Heart left ventricle (tissue), 16 donors: ENCODE measurements at regions of chr9 and their contacts with region 1.

Region 1: GRCh38 chr9:136400038-136400834 is at the start of gene SNAPC4:
- DNase-seq: peak; percentile 87 to 95 (median 88)
- ATAC-seq: peak; percentile 75 to 94 (median 92)
- H3K4me3 ChIP-seq: peak within 1 kb of the TSS; percentile 80 to 100 (median 94)
- H3K27ac ChIP-seq: peak within 1 kb of the TSS in 9 of 12 donors; percentile 2 to 75 (median 63)
- H3K4me1 ChIP-seq: peaks cover 0 to 37% (median 17%) of the 10 kb centered on the region in 12 donors
- H3K27me3 ChIP-seq: no peaks in the 10 kb centered on the region
- CTCF ChIP-seq: peak; percentile 78 to 99 (median 98)
- POLR2A ChIP-seq: peak in 1 of 2 donors; percentile 70
- total RNA-seq, gene SNAPC4: 3.1 to 7.8 (median 4.5) TPM

Region 2: DNA sequence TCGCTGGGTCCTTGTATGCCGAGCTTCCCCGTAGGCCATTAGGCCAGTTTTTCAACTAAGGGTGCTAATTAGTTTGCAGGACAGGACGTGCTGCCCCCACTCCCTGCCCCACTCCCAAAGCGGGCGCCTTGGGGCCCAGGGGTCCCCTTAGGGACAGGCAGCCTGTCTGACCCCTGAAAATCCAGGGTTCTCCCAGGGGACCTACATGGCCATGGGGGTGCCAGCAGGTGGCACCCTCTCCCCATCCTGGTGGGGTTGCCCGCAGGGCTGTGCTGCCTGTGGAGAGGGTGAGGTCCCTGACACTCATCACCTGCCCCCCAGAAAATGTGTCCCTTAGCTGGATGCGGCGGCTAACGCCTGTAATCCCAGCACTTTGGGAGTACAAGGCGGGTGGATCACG is 87.8 kb before region 1 on chr9:
- intact Hi-C with region 1: loop called in 3 of 10 experiments (anchors 1 to 5 kb)
- DNase-seq: peak in 1 of 5 donors; percentile 62
- ATAC-seq: peak in 3 of 4 donors; percentile 71 to 80 (median 80)
- H3K4me3 ChIP-seq: no peak overlapping the region
- H3K27ac ChIP-seq: no peak overlapping the region
- H3K4me1 ChIP-seq: no peaks in the 10 kb centered on the region
- H3K27me3 ChIP-seq: peaks cover 0 to 18% (median 4%) of the 10 kb centered on the region in 9 donors
- CTCF ChIP-seq: peak; percentile 45 to 68 (median 60)
- POLR2A ChIP-seq: no peak

Region 3: DNA sequence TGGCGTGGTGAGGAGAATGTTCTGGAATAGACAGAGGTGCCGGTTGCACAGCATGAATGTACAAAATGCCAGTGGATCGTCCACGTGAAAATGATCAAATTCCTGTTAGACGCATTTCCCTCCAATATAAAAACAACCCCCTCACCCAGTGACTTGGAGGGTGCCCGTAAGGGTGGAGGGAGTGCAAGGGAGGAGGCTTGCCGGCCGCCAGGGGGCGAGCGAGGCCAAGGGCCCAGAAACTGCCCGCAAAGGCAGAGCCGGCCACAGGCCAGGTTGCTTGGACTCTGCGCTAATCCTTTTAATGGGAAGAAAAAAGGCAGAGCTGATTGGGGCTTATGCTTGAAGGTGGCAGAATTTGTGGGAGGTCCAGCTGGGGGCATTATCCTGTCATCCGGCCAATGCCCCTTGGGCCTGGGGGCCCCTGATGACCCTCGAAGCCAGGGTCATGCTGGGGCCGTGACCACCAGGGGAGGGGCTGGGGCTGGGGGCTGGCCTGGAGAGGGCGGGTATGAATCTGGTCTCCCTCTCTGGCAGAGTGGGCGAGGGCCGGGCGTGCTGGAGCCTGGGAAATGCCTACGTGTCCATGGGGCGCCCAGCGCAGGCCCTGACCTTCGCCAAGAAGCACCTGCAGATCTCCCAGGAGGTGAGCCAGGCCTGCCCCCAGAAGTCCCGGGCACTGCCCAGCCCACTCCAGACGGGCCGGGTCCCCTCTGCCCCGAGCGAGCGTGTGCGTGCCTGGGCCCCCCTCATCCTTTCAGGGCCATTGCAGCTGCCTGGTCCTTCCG is 60.9 kb before region 1 on chr9:
- intact Hi-C with region 1: loop called in 8 of 10 experiments (anchors 1 to 10 kb)
- DNase-seq: peak in 4 of 5 donors; percentile 65 to 85 (median 72)
- ATAC-seq: peak in 1 of 4 donors; percentile 34
- H3K4me3 ChIP-seq: no peak overlapping the region
- H3K27ac ChIP-seq: peak overlapping the region in 3 of 12 donors; percentile 2 to 94 (median 30)
- H3K4me1 ChIP-seq: peaks cover 0 to 46% (median 26%) of the 10 kb centered on the region in 12 donors
- H3K27me3 ChIP-seq: no peaks in the 10 kb centered on the region
- CTCF ChIP-seq: peak; percentile 80 to 92 (median 84)
- POLR2A ChIP-seq: no peak

Region 4: DNA sequence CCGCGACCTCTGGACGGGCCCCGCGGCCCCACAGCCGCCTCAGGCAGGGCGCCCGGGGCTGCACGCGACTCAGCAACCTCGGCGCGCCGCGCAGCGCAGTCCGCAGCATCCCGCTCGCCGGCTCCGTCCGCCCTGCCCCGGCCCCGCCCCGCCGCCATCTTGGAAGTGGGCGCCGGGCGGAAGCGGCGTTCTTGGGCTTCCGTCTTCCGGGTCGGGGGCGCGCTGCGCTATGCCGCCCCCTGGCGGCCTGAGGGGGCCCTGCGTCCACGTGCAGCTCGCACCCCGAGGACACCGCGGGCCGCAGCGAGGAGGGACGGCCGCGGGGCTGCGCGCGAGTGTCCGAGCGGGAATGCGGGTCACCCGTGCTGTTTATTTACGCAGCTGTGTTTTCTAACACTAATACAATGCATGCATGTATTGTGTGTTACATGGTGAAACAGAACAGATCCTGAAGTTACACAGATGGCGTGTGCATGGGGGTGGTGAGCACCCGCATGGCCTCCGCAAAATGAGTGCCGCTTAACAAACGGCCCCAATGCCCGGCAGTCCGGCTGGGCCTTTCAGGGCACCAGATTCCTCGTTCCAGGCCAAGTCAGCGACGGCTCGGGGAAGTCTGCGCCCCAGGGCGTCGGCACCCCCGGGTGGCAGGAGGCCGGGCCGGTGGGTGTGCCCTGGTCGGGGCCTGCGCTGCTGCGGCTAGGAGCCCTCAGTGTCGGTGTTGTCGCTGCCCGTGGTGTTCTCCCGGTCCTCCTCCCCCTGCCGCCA is 36.4 kb before region 1 on chr9 and contains the start of gene DNLZ:
- intact Hi-C with region 1: loop called in 1 of 10 experiments (anchors 2 kb)
- DNase-seq: peak; percentile 84 to 95 (median 88)
- ATAC-seq: peak; percentile 11 to 61 (median 49)
- H3K4me3 ChIP-seq: peak within 1 kb of the TSS; percentile 60 to 98 (median 84)
- H3K27ac ChIP-seq: peak within 1 kb of the TSS; percentile 88 to 98 (median 96)
- H3K4me1 ChIP-seq: peaks cover 3 to 35% (median 22%) of the 10 kb centered on the region in 12 donors
- H3K27me3 ChIP-seq: no peaks in the 10 kb centered on the region
- CTCF ChIP-seq: peak; percentile 91 to 100 (median 98)
- POLR2A ChIP-seq: peak in 1 of 2 donors; percentile 58
- total RNA-seq, gene DNLZ: 21.3 to 67.8 (median 33.6) TPM

Region 5: GRCh38 chr9:136439550-136440408 is 39.5 kb after region 1 on chr9 and contains the start of gene INPP5E:
- intact Hi-C with region 1: loop called in 1 of 10 experiments (anchors 5 kb)
- DNase-seq: peak; percentile 76 to 90 (median 79)
- ATAC-seq: peak; percentile 37 to 89 (median 79)
- H3K4me3 ChIP-seq: peak within 1 kb of the TSS; percentile 64 to 99 (median 95)
- H3K27ac ChIP-seq: peak within 1 kb of the TSS; percentile 50 to 92 (median 86)
- H3K4me1 ChIP-seq: peaks cover 8 to 44% (median 30%) of the 10 kb centered on the region in 12 donors
- H3K27me3 ChIP-seq: no peaks in the 10 kb centered on the region
- CTCF ChIP-seq: peak; percentile 49 to 98 (median 74)
- POLR2A ChIP-seq: peak in 1 of 2 donors; percentile 17
- total RNA-seq, gene INPP5E: 7.3 to 11.7 (median 9.5) TPM

Region 6: GRCh38 chr9:136455043-136456002 is 55.1 kb after region 1 on chr9:
- intact Hi-C with region 1: no loop called
- DNase-seq: no peak
- ATAC-seq: peak in 1 of 4 donors; percentile 9
- H3K4me3 ChIP-seq: no peak overlapping the region
- H3K27ac ChIP-seq: no peak overlapping the region
- H3K4me1 ChIP-seq: peaks cover 0 to 4% (median 0%) of the 10 kb centered on the region in 12 donors
- H3K27me3 ChIP-seq: no peaks in the 10 kb centered on the region
- CTCF ChIP-seq: no peak
- POLR2A ChIP-seq: no peak